Activated naive CD4-positive, alpha-beta T cell treated with anti-CD3 and anti-CD28 coated beads for 36 hours (primary cell): ENCODE measurements at regions of chr9 and their contacts with region 1.

Region 1: GRCh38 chr9:21995177-21996086 is 841 bp downstream of the CDKN2B-AS1 start:
- DNase-seq: peak; percentile 77
- H3K4me3 Mint-ChIP-seq: peak overlapping the region; percentile 87
- H3K27ac Mint-ChIP-seq: peak overlapping the region; percentile 36
- H3K4me1 Mint-ChIP-seq: peaks cover 10% of the 10 kb centered on the region
- H3K27me3 Mint-ChIP-seq: peaks cover 42% of the 10 kb centered on the region

Region 2: GRCh38 chr9:21334701-21335632 is 660.5 kb before region 1 on chr9 and contains the start of gene KLHL9:
- CTCF ChIA-PET with region 1: no interaction called
- intact Hi-C with region 1: loop called (anchors 1 kb)
- DNase-seq: peak; percentile 93
- H3K4me3 Mint-ChIP-seq: peak within 1 kb of the TSS; percentile 84
- H3K27ac Mint-ChIP-seq: peak within 1 kb of the TSS; percentile 91
- H3K4me1 Mint-ChIP-seq: peaks cover 48% of the 10 kb centered on the region
- H3K27me3 Mint-ChIP-seq: no peaks in the 10 kb centered on the region
- total RNA-seq, gene KLHL9: 17.5 to 18.3 TPM

Region 3: GRCh38 chr9:21656776-21657674 is 338.4 kb before region 1 on chr9:
- CTCF ChIA-PET with region 1: no interaction called
- intact Hi-C with region 1: no loop called
- DNase-seq: no peak
- H3K4me3 Mint-ChIP-seq: no peak overlapping the region
- H3K27ac Mint-ChIP-seq: no peak overlapping the region
- H3K4me1 Mint-ChIP-seq: peaks cover 14% of the 10 kb centered on the region
- H3K27me3 Mint-ChIP-seq: no peaks in the 10 kb centered on the region

Region 4: GRCh38 chr9:21802195-21803000 is 193.0 kb before region 1 on chr9 and contains the start of gene MTAP:
- CTCF ChIA-PET with region 1: interaction called, 5 read pairs
- intact Hi-C with region 1: loop called (anchors 2 kb)
- DNase-seq: peak; percentile 82
- H3K4me3 Mint-ChIP-seq: peak within 1 kb of the TSS; percentile 99
- H3K27ac Mint-ChIP-seq: peak within 1 kb of the TSS; percentile 97
- H3K4me1 Mint-ChIP-seq: peaks cover 41% of the 10 kb centered on the region
- H3K27me3 Mint-ChIP-seq: peaks cover 4% of the 10 kb centered on the region
- total RNA-seq, gene MTAP: 59.0 to 66.4 TPM

Region 5: DNA sequence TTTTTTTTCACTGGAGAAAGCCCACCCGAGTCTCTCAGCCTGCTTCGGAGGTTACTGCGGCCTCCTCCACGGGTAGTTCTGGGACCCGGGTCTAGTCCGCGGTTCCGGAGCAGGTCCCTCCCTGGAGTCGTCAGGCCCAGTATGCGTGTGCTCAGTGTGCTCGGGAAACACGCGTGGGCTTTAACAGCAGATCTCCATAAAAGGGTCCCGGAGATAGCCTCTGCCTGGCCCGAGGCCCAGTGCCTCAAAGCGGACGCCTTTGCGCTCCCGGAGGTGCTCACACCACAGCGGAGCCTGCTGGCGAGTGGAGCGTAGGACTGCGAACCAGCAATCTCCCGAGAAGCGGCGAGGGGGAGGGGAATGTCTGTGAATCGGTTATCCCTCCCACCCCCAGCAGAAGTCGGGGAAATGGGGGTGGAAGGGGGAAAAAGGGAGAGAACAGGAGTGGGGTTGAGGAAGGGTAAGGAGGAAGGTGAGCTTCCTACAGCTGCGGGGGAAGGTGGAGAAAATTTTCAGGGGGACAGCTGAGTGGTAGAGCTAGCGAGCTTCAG is 30.0 kb before region 1 on chr9:
- CTCF ChIA-PET with region 1: no interaction called
- intact Hi-C with region 1: loop called (anchors 1 kb)
- DNase-seq: peak; percentile 68
- H3K4me3 Mint-ChIP-seq: peak overlapping the region; percentile 51
- H3K27ac Mint-ChIP-seq: no peak overlapping the region
- H3K4me1 Mint-ChIP-seq: peaks cover 17% of the 10 kb centered on the region
- H3K27me3 Mint-ChIP-seq: peaks cover 86% of the 10 kb centered on the region

Region 6: DNA sequence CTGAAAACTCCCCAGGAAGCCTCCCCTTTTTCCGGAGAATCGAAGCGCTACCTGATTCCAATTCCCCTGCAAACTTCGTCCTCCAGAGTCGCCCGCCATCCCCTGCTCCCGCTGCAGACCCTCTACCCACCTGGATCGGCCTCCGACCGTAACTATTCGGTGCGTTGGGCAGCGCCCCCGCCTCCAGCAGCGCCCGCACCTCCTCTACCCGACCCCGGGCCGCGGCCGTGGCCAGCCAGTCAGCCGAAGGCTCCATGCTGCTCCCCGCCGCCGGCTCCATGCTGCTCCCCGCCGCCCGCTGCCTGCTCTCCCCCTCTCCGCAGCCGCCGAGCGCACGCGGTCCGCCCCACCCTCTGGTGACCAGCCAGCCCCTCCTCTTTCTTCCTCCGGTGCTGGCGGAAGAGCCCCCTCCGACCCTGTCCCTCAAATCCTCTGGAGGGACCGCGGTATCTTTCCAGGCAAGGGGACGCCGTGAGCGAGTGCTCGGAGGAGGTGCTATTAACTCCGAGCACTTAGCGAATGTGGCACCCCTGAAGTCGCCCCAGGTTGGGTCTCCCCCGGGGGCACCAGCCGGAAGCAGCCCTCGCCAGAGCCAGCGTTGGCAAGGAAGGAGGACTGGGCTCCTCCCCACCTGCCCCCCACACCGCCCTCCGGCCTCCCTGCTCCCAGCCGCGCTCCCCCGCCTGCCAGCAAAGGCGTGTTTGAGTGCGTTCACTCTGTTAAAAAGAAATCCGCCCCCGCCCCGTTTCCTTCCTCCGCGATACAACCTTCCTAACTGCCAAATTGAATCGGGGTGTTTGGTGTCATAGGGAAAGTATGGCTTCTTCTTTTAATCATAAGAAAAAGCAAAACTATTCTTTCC is 20.7 kb before region 1 on chr9:
- CTCF ChIA-PET with region 1: interaction called, 3 read pairs
- intact Hi-C with region 1: loop called (anchors 1 kb)
- DNase-seq: peak; percentile 75
- H3K4me3 Mint-ChIP-seq: peak overlapping the region; percentile 56
- H3K27ac Mint-ChIP-seq: no peak overlapping the region
- H3K4me1 Mint-ChIP-seq: peaks cover 14% of the 10 kb centered on the region
- H3K27me3 Mint-ChIP-seq: peaks cover 81% of the 10 kb centered on the region